ENCODE measurements at regions of chr1 and their contacts with region 1.

Region 1: GRCh38 chr1:214123061-214123784 is 135.4 kb downstream of the PROX1 start:
- DNase-seq: peak; percentile 57
- ATAC-seq: peak; percentile 87
- H3K4me3 ChIP-seq: no peak overlapping the region
- H3K27ac ChIP-seq: no peak overlapping the region
- H3K4me1 ChIP-seq: no peaks in the 10 kb centered on the region
- H3K27me3 ChIP-seq: peaks cover 3% of the 10 kb centered on the region; the same call in 1 of the 2 replicates
- CTCF ChIP-seq: peak; percentile 63
- POLR2A ChIP-seq: no peak
- RAD21 ChIP-seq: peak; percentile 71

Region 2: DNA sequence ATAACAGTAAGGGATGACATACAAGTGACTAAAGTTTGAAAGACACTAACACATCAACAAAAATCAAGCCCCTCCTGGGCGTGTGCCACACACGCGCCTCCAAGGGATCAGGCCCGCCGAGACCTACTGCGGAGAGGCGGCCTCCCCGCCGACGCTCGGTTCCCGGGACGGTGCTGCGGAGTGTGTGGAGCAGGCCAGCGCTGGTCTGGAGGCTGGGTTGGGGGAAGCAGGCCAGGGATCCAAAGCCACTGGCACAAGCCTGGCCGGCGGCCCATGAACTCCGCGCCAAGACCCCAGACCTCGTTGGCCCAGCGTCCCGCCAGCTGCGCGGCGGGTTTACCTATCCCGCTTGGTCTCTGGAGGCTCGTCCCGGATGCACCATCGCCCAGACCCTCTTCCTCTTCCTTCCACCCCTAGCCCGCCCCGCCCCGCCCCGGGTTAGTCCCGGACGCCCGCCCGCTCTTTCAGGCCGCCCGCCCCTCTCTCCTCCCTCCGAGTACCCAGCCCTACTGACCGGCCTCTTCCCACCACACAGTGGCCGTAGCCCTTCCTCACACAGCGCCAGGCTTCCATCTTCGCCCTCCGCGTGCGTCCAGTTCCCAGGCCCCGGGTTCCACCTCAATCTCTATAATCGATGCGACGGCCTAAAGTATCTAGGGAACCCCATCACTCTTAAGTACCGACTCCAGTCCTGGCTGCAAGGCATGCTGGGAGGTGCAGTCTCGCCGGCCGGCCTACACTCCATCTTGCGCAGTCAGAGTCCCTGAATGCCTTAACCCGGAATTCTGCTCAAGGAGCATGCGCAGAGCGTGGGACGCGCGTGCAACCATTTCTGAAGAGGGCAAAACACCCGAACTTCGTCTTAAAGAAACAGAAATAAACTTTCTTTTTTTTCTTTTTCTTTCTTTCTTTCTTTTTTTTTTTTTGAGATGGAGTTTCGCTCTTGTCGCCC is 1107.8 kb before region 1 on chr1 and contains the start of gene ANGEL2:
- CTCF ChIA-PET with region 1: no interaction called
- POLR2A ChIA-PET with region 1: no interaction called
- dilution Hi-C with region 1: no loop called
- in situ Hi-C with region 1: no loop called
- intact Hi-C with region 1: loop called (anchors 10 kb)
- DNase-seq: peak; percentile 97
- ATAC-seq: peak; percentile 97
- H3K4me3 ChIP-seq: peak within 1 kb of the TSS; percentile 56
- H3K27ac ChIP-seq: peak within 1 kb of the TSS; percentile 92
- H3K4me1 ChIP-seq: no peaks in the 10 kb centered on the region; the same call in 1 of the 2 replicates
- H3K27me3 ChIP-seq: peaks cover under 1% of the 10 kb centered on the region; the same call in 1 of the 2 replicates
- CTCF ChIP-seq: no peak
- POLR2A ChIP-seq: no peak; the same call in 1 of the 2 replicates
- RAD21 ChIP-seq: no peak
- total RNA-seq, gene ANGEL2: 44.1 and 49.2 TPM in 2 replicates

Region 3: GRCh38 chr1:213122514-213122929 is 1000.7 kb before region 1 on chr1:
- CTCF ChIA-PET with region 1: interaction called, 4 read pairs
- POLR2A ChIA-PET with region 1: interaction called, 3 read pairs
- dilution Hi-C with region 1: no loop called
- in situ Hi-C with region 1: loop called (anchors 10 kb)
- intact Hi-C with region 1: loop called (anchors 2 kb)
- DNase-seq: peak; percentile 71
- ATAC-seq: peak; percentile 55
- H3K4me3 ChIP-seq: no peak overlapping the region
- H3K27ac ChIP-seq: no peak overlapping the region
- H3K4me1 ChIP-seq: peaks cover 10% of the 10 kb centered on the region
- H3K27me3 ChIP-seq: no peaks in the 10 kb centered on the region
- CTCF ChIP-seq: peak; percentile 59
- POLR2A ChIP-seq: no peak
- RAD21 ChIP-seq: peak; percentile 57

Region 4: GRCh38 chr1:213244664-213245091 is 878.5 kb before region 1 on chr1:
- CTCF ChIA-PET with region 1: interaction called, 11 read pairs
- POLR2A ChIA-PET with region 1: no interaction called
- dilution Hi-C with region 1: no loop called
- in situ Hi-C with region 1: loop called (anchors 10 kb)
- intact Hi-C with region 1: loop called (anchors 1 kb)
- DNase-seq: peak; percentile 65
- ATAC-seq: peak; percentile 63
- H3K4me3 ChIP-seq: no peak overlapping the region
- H3K27ac ChIP-seq: no peak overlapping the region
- H3K4me1 ChIP-seq: peaks cover 1% of the 10 kb centered on the region; the same call in 1 of the 2 replicates
- H3K27me3 ChIP-seq: no peaks in the 10 kb centered on the region
- CTCF ChIP-seq: peak; percentile 79
- POLR2A ChIP-seq: no peak
- RAD21 ChIP-seq: peak; percentile 72

Region 5: DNA sequence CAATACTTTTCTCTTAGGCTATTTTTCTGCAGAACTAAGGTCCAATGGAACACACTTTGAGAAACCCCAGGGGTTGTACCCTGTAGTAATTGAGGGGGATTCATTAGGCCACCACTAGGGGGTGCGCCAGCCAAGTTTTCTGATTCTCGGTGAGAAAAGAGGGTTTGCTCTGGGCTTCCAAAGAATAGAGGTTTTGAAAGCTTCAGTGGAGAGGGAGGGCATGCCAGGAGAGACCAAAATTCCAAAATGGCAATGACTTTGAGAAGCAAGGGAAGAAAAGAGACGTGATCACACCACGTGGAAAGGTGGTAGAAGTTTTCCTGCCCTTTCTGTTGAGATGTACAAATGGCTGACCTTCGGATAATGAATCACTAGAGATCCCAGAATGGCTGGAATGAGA is 748.9 kb before region 1 on chr1:
- CTCF ChIA-PET with region 1: no interaction called
- POLR2A ChIA-PET with region 1: no interaction called
- dilution Hi-C with region 1: no loop called
- in situ Hi-C with region 1: loop called (anchors 10 kb)
- intact Hi-C with region 1: loop called (anchors 1 kb)
- DNase-seq: peak; percentile 32
- ATAC-seq: peak; percentile 92
- H3K4me3 ChIP-seq: no peak overlapping the region
- H3K27ac ChIP-seq: no peak overlapping the region
- H3K4me1 ChIP-seq: no peaks in the 10 kb centered on the region
- H3K27me3 ChIP-seq: no peaks in the 10 kb centered on the region
- CTCF ChIP-seq: peak; percentile 78
- POLR2A ChIP-seq: no peak
- RAD21 ChIP-seq: peak; percentile 58

Region 6: DNA sequence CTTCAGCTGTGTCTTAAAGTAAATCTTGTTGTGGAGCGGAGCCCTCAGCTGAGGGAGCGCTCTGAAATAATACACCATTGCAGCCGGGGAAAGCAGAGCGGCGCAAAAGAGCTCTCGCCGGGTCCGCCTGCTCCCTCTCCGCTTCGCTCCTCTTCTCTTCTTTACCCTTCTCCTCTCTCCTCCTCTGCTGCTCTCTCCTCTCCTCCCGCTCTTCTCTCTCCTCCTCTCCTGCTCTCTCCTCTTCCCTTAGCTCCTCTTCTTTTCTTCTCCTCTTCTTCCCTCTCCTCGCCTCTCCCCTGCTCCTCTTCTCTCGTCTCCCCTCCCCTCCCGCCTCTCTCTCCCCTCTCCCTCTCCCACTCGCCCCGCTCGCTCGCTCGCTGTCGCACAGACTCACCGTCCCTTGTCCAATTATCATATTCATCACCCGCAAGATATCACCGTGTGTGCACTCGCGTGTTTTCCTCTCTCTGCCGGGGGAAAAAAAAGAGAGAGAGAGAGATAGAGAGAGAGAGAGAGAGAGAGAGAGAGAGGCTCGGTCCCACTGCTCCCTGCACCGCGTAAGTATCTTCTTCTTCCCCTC is 135.2 kb before region 1 on chr1 and contains the start of gene PROX1:
- CTCF ChIA-PET with region 1: no interaction called
- POLR2A ChIA-PET with region 1: no interaction called
- dilution Hi-C with region 1: no loop called
- in situ Hi-C with region 1: no loop called
- intact Hi-C with region 1: loop called (anchors 5 kb)
- DNase-seq: peak; percentile 87
- ATAC-seq: peak; percentile 97
- H3K4me3 ChIP-seq: peak within 1 kb of the TSS; percentile 51
- H3K27ac ChIP-seq: no peak within 1 kb of the TSS
- H3K4me1 ChIP-seq: peaks cover 3% of the 10 kb centered on the region; the same call in 1 of the 2 replicates
- H3K27me3 ChIP-seq: peaks cover 54% of the 10 kb centered on the region
- CTCF ChIP-seq: 0 out of 2 replicates have a peak, but pooled peaks have one; percentile 11
- POLR2A ChIP-seq: no peak
- RAD21 ChIP-seq: no peak
- total RNA-seq, gene PROX1: under 0.01 and 0.28 TPM in 2 replicates

Region 7: DNA sequence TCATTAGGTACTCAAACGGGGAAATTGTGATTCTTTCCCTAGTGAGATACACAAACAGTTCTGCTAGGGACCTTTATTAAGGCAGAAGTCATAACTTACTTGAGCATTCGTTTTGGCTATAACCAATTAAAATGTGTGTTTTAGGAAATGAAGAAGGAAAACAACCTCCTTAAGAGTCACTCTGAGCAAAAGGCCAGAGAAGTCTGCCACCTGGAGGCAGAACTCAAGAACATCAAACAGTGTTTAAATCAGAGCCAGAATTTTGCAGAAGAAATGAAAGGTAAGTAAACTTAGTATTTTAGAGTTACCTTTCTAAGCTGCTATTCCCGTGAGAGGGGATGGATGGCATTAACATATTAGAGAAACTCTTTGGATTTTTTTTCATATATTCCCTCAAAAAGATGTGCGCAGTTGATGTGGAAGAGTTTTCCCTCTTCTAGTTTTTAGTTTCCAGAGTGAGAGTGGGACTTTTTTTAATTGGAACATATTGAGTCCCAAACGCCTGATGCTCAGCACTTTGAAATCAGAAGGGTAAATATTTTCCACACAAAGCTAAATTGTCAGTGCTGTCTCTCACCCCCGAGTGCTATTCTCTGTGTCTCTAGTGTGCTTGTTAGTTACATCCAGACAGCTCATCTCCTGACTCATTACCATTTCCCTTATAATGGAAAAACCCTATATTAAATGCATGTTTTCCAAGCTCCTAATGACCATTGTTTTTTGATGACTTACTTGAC is 514.7 kb after region 1 on chr1:
- CTCF ChIA-PET with region 1: no interaction called
- POLR2A ChIA-PET with region 1: no interaction called
- dilution Hi-C with region 1: no loop called
- in situ Hi-C with region 1: no loop called
- intact Hi-C with region 1: no loop called
- DNase-seq: peak; percentile 69
- ATAC-seq: peak; percentile 69
- H3K4me3 ChIP-seq: no peak overlapping the region
- H3K27ac ChIP-seq: no peak overlapping the region
- H3K4me1 ChIP-seq: peaks cover 10% of the 10 kb centered on the region; the same call in 1 of the 2 replicates
- H3K27me3 ChIP-seq: no peaks in the 10 kb centered on the region
- CTCF ChIP-seq: peak; percentile 64
- POLR2A ChIP-seq: no peak
- RAD21 ChIP-seq: peak; percentile 58

Region 8: DNA sequence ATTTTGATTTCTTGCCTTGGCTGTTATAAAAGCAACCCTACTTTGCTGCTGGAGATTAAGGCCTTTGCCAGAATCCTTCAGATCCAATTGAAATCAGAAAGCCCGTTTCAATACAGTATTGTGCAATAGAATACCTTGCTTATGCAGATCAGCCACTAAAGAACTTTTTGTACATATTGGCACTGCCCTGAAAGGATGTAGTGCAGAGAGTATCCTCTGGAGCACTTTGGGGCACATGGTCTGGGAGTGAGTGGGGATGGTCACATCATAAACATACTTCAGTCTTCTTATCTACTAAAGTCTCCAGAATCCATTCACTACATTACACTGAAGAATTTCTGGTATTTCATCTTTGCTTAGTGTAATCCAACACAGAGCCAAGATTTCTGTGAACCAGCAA is 668.7 kb after region 1 on chr1:
- CTCF ChIA-PET with region 1: no interaction called
- POLR2A ChIA-PET with region 1: no interaction called
- dilution Hi-C with region 1: no loop called
- in situ Hi-C with region 1: no loop called
- intact Hi-C with region 1: no loop called
- DNase-seq: peak; percentile 50
- ATAC-seq: peak; percentile 91
- H3K4me3 ChIP-seq: no peak overlapping the region
- H3K27ac ChIP-seq: no peak overlapping the region
- H3K4me1 ChIP-seq: 0 out of 2 replicates have a peak, but pooled peaks cover 2% of the 10 kb centered on the region
- H3K27me3 ChIP-seq: no peaks in the 10 kb centered on the region
- CTCF ChIP-seq: no peak
- POLR2A ChIP-seq: no peak
- RAD21 ChIP-seq: no peak